Posterior cingulate gyrus (tissue), 11 donors: ENCODE measurements at regions of chr22 and their contacts with region 1.

Region 1: DNA sequence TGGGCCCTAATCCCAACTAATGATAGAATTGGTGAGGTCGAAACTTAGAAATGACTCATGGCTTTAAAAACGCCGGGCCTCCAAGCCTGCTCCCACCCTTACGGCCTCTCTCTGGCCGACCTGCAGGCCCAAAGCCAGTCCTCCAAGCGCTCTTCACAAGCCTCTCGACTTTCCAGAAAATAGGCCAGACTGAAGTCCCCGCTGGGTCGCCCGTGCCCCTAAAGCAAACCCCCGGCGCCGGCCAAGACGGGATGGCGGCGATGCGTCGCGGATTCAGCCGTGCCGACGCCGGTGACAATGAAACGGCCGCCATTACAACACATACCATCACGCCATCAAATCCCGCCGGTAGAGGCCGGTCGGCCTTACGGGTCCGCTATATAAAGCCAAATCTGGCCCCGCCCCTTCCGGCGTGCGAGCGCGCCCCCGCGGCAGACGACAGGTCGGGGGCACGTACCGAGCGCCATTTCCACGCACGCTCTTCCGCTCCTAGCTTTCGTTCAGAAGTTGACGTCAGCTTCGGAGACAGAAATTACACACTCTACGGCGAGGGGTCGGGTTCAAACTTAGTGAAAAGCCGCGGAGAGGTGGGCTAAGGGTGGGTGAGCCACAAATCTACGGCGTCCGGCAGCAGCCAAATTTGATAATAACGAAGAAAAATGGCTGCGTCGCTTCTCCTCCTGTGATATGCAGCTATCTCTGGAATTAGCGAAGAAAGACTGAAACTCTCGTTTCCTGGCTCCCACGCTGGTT is at the start of gene RPL3:
- DNase-seq: peak; percentile 95 to 100 (median 96)

Region 2: GRCh38 chr22:39170825-39171622 is 148.4 kb before region 1 on chr22:
- intact Hi-C with region 1: loop called (anchors 1 kb)
- DNase-seq: peak; percentile 75 to 98 (median 90)

Region 3: DNA sequence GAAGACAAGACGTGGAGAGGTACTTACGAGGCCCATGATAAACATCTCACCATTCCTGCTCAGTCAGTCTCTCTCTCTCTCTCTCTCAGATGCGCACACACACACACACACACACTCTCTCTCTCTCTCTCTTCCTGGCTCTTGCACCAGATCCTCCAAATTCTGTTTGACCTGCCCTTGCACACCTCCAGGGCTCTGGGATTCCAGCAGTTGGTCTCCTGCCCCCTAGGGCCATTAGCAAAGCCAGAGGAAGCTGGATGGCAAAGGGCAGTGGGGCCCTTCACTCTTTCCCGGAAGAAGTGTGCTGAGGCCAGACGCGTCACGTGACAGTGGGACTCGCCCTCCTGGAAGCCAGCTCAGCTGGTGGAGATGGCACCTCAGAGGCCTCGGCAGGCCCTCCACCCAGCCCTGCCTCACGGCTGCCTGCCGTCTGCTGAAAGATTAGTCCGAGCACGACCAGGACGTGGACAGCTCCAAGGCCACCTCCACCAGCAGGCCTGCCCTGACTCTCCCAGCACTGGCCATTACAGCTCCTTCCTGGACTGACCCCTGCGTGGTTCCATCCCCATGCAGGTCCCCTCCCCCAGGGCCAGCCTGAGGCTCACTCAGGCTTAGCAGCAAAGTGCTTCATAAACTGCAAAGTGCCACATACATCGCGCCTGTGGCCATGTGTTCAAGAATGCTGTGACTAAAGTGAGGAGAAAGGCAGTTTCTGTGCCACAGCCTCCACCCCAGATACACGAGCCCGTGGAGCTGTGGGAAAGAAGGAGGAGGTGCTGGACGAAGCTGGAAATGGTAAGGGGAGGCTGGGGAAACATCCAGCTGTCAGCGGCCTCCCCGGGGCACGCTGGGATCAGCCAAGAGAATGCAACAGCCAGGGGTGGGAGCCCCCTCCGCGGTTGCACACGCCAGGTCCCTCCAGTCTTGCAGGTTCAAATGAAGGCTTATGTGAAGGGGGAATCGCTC is 78.3 kb before region 1 on chr22:
- intact Hi-C with region 1: loop called (anchors 5 kb)
- DNase-seq: peak in 2 of 10 donors; percentile 73 to 89

Region 4: GRCh38 chr22:39349506-39349966 is 30.1 kb after region 1 on chr22:
- intact Hi-C with region 1: loop called (anchors 1 kb)
- DNase-seq: peak in 5 of 10 donors; percentile 36 to 93 (median 67)

Region 5: GRCh38 chr22:39765046-39765445 is 445.6 kb after region 1 on chr22:
- intact Hi-C with region 1: no loop called
- DNase-seq: no peak